PC-9 (cell line): ENCODE measurements at regions of chr20 and their contacts with region 1.

Region 1: DNA sequence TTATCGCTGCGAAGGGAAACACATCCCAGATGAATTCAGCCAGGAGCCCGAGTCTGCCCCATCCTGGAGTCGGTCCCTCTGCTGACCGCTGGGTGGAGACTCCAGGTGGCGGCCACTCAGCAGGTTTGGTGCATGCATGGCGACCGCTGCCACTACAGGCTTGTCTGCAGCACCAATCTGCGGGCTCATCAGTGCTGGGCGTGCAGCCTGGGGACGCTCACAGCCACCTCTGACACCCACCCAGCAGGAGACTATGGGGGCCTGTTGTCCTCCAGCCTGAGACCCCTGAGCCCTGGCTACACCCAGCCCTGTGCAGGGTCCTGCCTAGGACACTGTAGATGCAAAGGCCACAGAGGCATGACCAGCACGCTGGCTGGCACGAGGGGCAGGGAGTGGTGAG is 40.5 kb upstream of the GATA5 start:
- DNase-seq: peak; percentile 44 to 71
- H3K4me3 ChIP-seq: no peak overlapping the region
- H3K27ac ChIP-seq: no peak overlapping the region
- H3K4me1 ChIP-seq: no peaks in the 10 kb centered on the region
- H3K27me3 ChIP-seq: peaks cover 68% of the 10 kb centered on the region
- CTCF ChIP-seq: peak; percentile 78

Region 2: GRCh38 chr20:62603021-62603906 is 86.9 kb after region 1 on chr20:
- CTCF ChIA-PET with region 1: no interaction called
- POLR2A ChIA-PET with region 1: no interaction called
- intact Hi-C with region 1: loop called (anchors 5 kb)
- DNase-seq: peak in 1 of 2 experiments; percentile 74
- H3K4me3 ChIP-seq: no peak overlapping the region
- H3K27ac ChIP-seq: no peak overlapping the region
- H3K4me1 ChIP-seq: peaks cover 22% of the 10 kb centered on the region
- H3K27me3 ChIP-seq: peaks cover 18% of the 10 kb centered on the region
- CTCF ChIP-seq: no peak

Region 3: DNA sequence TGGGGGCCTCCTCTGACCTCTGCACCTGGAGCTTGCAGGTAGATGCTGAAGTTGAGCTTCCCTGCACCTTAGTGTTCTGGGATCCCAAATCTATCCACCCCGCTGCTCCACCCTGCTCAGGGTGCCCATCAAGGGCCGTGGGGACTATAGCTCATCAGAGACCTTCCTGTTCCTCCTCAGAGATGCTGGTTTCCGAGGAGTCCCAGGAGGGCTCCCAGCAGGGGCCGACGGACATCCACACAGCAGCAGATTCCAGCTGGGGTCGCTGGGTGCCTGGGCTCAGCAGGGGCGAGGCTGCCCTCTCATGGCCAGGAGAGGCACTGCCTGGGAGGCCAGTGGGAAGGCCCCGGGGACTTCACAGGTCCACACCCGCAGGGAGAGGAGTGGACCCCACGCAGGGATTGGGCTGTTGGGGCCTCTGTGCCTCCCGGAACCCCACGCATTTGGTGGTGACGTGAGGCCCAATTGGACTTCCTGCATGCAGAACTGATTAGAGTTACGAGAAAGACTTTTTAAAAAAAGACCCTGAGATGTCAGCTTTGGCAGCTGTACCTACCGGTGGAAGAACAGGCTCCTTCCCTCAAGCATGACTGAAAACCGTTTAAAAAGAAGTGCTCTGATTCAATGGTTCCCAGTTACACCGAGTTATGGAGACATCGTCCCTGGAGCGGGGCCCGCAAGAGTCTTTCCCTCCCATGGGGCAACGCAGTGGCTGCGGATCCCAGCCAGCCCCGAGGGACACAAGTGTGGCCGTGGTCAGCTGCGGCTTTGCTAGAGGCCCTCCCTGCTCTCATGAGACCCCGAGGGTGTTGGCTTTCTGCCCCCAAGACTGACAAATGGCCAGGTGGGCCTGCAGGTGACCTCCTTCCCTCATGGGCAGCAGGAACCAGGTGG is 100.6 kb after region 1 on chr20:
- CTCF ChIA-PET with region 1: interaction called, 4 read pairs
- POLR2A ChIA-PET with region 1: interaction called, 3 read pairs
- intact Hi-C with region 1: loop called (anchors 1 kb)
- DNase-seq: peak; percentile 52 to 84
- H3K4me3 ChIP-seq: no peak overlapping the region
- H3K27ac ChIP-seq: peak overlapping the region; percentile 76
- H3K4me1 ChIP-seq: peaks cover 47% of the 10 kb centered on the region
- H3K27me3 ChIP-seq: no peaks in the 10 kb centered on the region
- CTCF ChIP-seq: peak; percentile 97

Region 4: GRCh38 chr20:62668441-62669027 is 152.2 kb after region 1 on chr20:
- CTCF ChIA-PET with region 1: no interaction called
- POLR2A ChIA-PET with region 1: no interaction called
- intact Hi-C with region 1: loop called (anchors 5 kb)
- DNase-seq: peak; percentile 53 to 76
- H3K4me3 ChIP-seq: no peak overlapping the region
- H3K27ac ChIP-seq: no peak overlapping the region
- H3K4me1 ChIP-seq: no peaks in the 10 kb centered on the region
- H3K27me3 ChIP-seq: no peaks in the 10 kb centered on the region
- CTCF ChIP-seq: peak; percentile 91